Caco-2 (cell line): ENCODE measurements at regions of chr12 and their contacts with region 1.

Region 1: GRCh38 chr12:66269757-66270383 is 32.4 kb upstream of the HELB start:
- DNase-seq: no peak
- H3K4me3 ChIP-seq: no peak overlapping the region
- H3K4me3 Mint-ChIP-seq: no peak overlapping the region
- H3K27ac Mint-ChIP-seq: no peak overlapping the region
- H3K4me1 ChIP-seq: no peaks in the 10 kb centered on the region
- H3K4me1 Mint-ChIP-seq: no peaks in the 10 kb centered on the region
- H3K27me3 ChIP-seq: no peaks in the 10 kb centered on the region; the same call in 1 of the 2 replicates
- H3K27me3 Mint-ChIP-seq: peaks cover 7% of the 10 kb centered on the region
- CTCF ChIP-seq: peak; percentile 48 to 57

Region 2: DNA sequence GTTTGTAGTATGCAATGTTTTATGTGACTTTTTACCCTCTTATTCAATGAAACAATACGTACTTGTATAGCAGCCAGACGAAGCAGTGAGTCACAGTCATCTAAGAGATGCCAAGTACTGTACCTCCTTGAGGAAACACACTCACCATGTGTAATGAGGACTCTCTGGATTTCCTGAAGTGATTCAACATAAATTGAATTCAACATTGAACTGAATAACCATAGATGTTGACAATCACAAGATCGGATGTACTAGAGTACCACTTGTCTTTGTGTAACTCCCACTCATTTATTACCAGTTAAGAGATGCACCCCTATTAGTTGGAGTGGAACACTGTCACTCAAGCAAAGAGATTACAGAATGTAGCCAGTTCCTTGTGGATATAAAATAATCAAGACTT is 620.7 kb before region 1 on chr12:
- CTCF ChIA-PET with region 1: no interaction called
- POLR2A ChIA-PET with region 1: no interaction called
- intact Hi-C with region 1: no loop called
- DNase-seq: no peak
- H3K4me3 ChIP-seq: no peak overlapping the region
- H3K4me3 Mint-ChIP-seq: no peak overlapping the region
- H3K27ac Mint-ChIP-seq: no peak overlapping the region
- H3K4me1 ChIP-seq: no peaks in the 10 kb centered on the region
- H3K4me1 Mint-ChIP-seq: no peaks in the 10 kb centered on the region
- H3K27me3 ChIP-seq: no peaks in the 10 kb centered on the region
- H3K27me3 Mint-ChIP-seq: no peaks in the 10 kb centered on the region
- CTCF ChIP-seq: no peak

Region 3: GRCh38 chr12:66301944-66302826 is 32.3 kb after region 1 on chr12 and contains the start of gene HELB:
- CTCF ChIA-PET with region 1: interaction called, 10 read pairs
- POLR2A ChIA-PET with region 1: interaction called, 3 read pairs
- intact Hi-C with region 1: no loop called
- DNase-seq: peak; percentile 95 to 98
- H3K4me3 ChIP-seq: peak within 1 kb of the TSS; percentile 49
- H3K4me3 Mint-ChIP-seq: peak within 1 kb of the TSS; percentile 95
- H3K27ac Mint-ChIP-seq: peak within 1 kb of the TSS; percentile 92
- H3K4me1 ChIP-seq: peaks cover 4% of the 10 kb centered on the region; the same call in 1 of the 2 replicates
- H3K4me1 Mint-ChIP-seq: peaks cover 12% of the 10 kb centered on the region
- H3K27me3 ChIP-seq: no peaks in the 10 kb centered on the region
- H3K27me3 Mint-ChIP-seq: peaks cover 17% of the 10 kb centered on the region
- CTCF ChIP-seq: no peak
- total RNA-seq, gene HELB: 3.4 and 3.9 TPM in 2 replicates

Region 4: DNA sequence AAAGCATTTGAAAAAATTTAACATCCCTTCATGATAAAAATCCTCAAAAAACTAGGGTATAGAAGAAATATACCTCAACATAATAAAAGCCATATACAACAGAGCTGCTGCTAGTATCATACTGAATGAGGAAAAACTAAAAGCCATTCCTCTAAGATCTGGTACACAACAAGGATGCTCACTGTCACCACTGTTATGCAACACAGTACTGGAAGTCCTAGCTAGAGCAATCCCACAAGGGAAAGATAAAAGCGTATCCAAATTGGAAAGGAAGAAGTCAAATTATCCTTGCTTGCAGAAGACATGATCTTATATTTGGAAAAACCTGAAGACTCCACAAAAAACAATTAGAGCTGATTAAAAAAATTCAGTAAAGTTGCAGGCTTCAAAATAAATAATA is 147.3 kb after region 1 on chr12:
- CTCF ChIA-PET with region 1: no interaction called
- POLR2A ChIA-PET with region 1: no interaction called
- intact Hi-C with region 1: no loop called
- DNase-seq: no peak
- H3K4me3 ChIP-seq: no peak overlapping the region
- H3K4me3 Mint-ChIP-seq: no peak overlapping the region
- H3K27ac Mint-ChIP-seq: no peak overlapping the region
- H3K4me1 ChIP-seq: no peaks in the 10 kb centered on the region
- H3K4me1 Mint-ChIP-seq: no peaks in the 10 kb centered on the region
- H3K27me3 ChIP-seq: no peaks in the 10 kb centered on the region
- H3K27me3 Mint-ChIP-seq: peaks cover 9% of the 10 kb centered on the region
- CTCF ChIP-seq: no peak

Region 5: GRCh38 chr12:66688846-66689439 is 419.1 kb after region 1 on chr12:
- CTCF ChIA-PET with region 1: no interaction called
- POLR2A ChIA-PET with region 1: no interaction called
- intact Hi-C with region 1: loop called (anchors 10 kb)
- DNase-seq: peak; percentile 81 to 82
- H3K4me3 ChIP-seq: no peak overlapping the region
- H3K4me3 Mint-ChIP-seq: no peak overlapping the region
- H3K27ac Mint-ChIP-seq: no peak overlapping the region
- H3K4me1 ChIP-seq: no peaks in the 10 kb centered on the region
- H3K4me1 Mint-ChIP-seq: no peaks in the 10 kb centered on the region
- H3K27me3 ChIP-seq: no peaks in the 10 kb centered on the region
- H3K27me3 Mint-ChIP-seq: peaks cover 11% of the 10 kb centered on the region
- CTCF ChIP-seq: peak; percentile 66 to 87